ENCODE measurements at regions of chr1 and their contacts with region 1.

Region 1: DNA sequence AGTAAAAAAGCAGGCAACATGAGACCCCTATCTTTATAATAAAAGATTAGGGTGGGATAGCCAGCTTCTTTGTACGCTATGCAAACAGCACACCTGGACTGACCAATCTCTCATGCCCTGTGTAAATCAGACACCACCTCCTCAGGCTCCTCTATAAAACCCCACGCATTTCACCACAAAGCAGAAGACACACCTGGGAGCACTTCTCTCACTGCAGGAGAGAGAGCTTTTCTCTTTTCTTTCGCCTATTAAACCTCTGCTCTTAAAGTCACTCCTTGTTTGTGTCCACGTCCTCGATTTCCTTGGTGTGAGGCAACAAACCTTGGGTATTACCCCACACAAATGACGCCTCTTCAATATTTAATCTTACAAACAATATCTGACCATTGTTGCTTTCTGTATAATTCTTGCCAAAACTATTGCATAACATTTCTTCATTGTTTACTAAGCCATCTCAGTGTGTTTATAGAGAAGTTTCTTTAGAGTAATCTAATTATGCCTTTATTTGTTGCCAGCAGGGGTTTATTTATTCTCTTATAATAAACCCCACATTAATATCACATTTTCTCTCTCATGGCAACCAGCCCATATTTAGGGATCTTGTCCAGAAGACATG is 31.6 kb upstream of the NUF2 start:
- DNase-seq: no peak
- H3K4me3 Mint-ChIP-seq: no peak overlapping the region
- H3K27ac Mint-ChIP-seq: peak overlapping the region; percentile 15
- H3K4me1 Mint-ChIP-seq: peaks cover 8% of the 10 kb centered on the region
- H3K27me3 Mint-ChIP-seq: no peaks in the 10 kb centered on the region
- CTCF ChIP-seq: no peak

Region 2: DNA sequence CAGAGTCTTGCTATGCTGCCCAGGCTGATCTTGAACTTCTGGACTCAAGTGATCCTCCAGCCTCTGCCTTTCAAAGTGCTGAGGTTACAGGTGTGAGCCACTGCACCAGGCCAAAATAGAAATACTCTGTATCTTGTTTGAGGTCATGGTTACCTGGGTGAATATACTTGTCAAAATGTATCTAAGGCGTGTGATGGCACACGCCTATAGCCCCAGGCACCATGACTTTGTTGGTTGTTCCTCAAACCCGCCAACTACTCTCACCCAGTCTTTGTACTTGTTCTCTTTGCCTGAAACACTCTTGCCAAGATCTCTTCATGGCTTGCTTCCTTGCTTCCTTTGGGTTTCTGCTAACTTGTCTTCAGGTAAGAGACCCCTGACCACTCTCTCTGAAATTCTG is 49.4 kb before region 1 on chr1:
- CTCF ChIA-PET with region 1: no interaction called
- intact Hi-C with region 1: loop called (anchors 1 kb)
- DNase-seq: no peak
- H3K4me3 Mint-ChIP-seq: no peak overlapping the region
- H3K27ac Mint-ChIP-seq: no peak overlapping the region
- H3K4me1 Mint-ChIP-seq: no peaks in the 10 kb centered on the region
- H3K27me3 Mint-ChIP-seq: no peaks in the 10 kb centered on the region
- CTCF ChIP-seq: no peak

Measured in Calu3 (cell line).